Thyroid gland (tissue), 4 donors: ENCODE measurements at regions of chr6 and their contacts with region 1.

Region 1: GRCh38 chr6:150079604-150080003 is 10.7 kb upstream of the ULBP3 start:
- DNase-seq: no peak
- H3K4me3 ChIP-seq: no peak overlapping the region
- H3K27ac ChIP-seq: no peak overlapping the region
- H3K4me1 ChIP-seq: peaks cover 20 to 21% of the 10 kb centered on the region in 2 donors
- H3K27me3 ChIP-seq: no peaks in the 10 kb centered on the region
- CTCF ChIP-seq: no peak
- POLR2A ChIP-seq: no peak

Region 2: DNA sequence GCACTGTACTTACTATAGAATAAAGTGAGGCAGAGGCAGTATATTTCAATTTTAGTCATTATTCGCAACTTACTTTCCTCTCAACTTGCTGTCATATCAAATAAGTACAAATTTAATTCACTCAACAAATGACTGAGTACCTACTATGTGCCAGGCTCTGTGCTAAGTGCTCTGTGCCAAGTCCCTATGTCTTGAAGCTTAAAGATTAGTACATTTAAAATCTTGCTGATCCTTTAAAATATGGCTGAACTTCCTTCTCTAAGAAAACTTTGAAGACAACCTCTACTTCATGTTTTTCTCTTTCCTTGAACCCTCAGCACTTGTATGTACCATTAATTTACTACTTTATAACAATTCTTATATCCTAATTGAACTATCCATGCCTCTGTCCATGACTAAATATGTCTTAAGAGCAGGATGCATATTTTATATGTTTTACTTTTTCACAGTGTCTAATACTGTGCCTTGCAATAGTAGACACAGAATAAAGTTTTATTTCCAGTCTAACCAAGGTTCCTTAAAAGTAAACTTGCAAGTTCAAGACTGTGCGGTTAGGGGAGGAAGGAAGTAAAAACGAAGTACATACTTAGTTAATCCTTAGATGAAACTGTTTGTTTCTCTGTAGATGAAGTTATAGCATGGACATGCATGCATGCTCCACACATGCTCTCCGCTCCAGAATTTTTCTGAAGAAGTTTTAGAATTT is 351.7 kb before region 1 on chr6:
- intact Hi-C with region 1: no loop called
- DNase-seq: no peak
- H3K4me3 ChIP-seq: no peak overlapping the region
- H3K27ac ChIP-seq: no peak overlapping the region
- H3K4me1 ChIP-seq: no peaks in the 10 kb centered on the region
- H3K27me3 ChIP-seq: no peaks in the 10 kb centered on the region
- CTCF ChIP-seq: no peak
- POLR2A ChIP-seq: no peak

Region 3: GRCh38 chr6:150334790-150335783 is 255.5 kb after region 1 on chr6:
- intact Hi-C with region 1: loop called (anchors 5 kb)
- DNase-seq: peak; percentile 40 to 43
- H3K4me3 ChIP-seq: no peak overlapping the region
- H3K27ac ChIP-seq: peak overlapping the region in 2 of 3 donors; percentile 16 to 36
- H3K4me1 ChIP-seq: peaks cover 14 to 15% of the 10 kb centered on the region in 2 donors
- H3K27me3 ChIP-seq: no peaks in the 10 kb centered on the region
- CTCF ChIP-seq: peak; percentile 38 to 76 (median 68)
- POLR2A ChIP-seq: no peak

Region 4: DNA sequence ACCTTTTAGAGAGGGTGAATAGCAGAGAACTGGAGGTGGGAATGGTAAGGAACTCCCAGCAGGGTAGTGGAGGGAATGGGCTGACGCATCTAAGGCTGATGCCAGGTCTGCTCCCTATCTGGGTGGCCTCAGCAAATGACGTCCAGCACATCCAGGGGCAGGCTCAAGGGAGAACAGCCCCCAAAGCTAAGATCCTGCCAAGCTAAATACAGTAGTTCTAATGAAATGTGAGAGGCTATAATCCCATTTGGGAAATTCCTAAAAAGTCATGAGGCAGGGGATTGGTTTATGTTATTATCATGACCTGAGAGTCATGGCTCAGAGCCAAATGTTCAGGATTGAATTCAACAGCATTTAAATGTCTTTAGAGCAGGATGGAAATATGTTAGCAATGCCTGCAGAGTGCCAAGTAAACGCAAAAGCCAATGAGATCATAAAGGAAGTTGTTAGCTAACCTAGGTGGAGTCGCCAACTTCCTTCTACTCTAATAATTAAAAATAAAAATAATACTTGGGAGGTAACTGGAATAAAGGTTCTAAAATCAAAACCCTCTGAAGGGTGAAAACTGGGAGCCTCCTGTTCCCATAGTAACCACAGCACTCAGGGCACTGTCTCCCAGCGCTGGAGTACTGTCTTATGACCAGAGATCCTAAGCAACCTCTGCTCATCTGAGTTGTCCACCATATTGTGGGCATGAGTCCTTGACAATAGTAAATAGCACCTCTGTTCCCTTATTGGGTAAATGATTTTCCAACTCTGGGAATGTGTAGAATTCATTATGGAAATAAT is 324.0 kb after region 1 on chr6:
- intact Hi-C with region 1: loop called (anchors 5 kb)
- DNase-seq: no peak
- H3K4me3 ChIP-seq: no peak overlapping the region
- H3K27ac ChIP-seq: peak overlapping the region in 1 of 3 donors; percentile 26
- H3K4me1 ChIP-seq: peaks cover 11 to 24% of the 10 kb centered on the region in 2 donors
- H3K27me3 ChIP-seq: no peaks in the 10 kb centered on the region
- CTCF ChIP-seq: no peak
- POLR2A ChIP-seq: peak in 1 of 2 donors; percentile 20